CD4-positive, alpha-beta T cell (primary cell): ENCODE measurements at regions of chr10 and their contacts with region 1.

Region 1: DNA sequence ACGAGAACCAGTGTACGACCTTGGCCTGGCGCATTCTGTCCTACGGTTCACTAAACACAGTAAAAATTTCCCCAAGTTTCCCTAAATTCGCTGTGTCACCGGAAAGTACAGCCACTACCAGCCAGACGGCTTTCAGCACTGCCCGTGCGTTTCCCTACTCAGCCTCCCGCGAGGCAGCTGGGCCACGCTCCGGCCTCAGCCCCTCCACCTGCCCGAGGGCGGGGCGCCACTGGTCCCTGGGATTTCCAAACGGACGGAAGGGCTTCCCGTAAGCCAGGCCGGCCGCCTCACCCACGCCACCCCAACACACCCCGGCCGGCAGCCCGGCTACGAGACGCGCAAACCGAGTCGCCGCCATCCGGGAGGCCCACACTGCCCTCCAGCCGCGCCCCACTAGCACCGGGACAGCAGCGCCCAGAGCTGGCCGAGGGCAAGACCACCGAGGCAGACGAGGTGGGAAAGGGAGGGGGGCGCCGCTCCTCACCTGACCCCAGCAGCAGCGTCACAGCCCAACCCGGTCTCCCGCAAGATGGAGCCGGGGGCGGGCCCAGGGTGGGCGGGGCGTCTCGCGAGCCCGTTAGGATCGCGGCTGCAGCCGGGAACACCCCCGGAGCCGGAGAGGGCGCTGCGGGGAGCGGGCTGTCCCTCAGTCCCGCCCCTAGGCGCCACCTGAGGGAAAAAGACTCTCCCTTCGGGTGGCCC is at the start of gene ANXA7:
- DNase-seq: peak; percentile 83 to 96 (median 92)
- ATAC-seq: peak; percentile 97
- H3K4me3 ChIP-seq: peak within 1 kb of the TSS; percentile 75
- H3K4me3 Mint-ChIP-seq: peak within 1 kb of the TSS; percentile 91
- H3K27ac ChIP-seq: peak within 1 kb of the TSS; percentile 86 to 98
- H3K27ac Mint-ChIP-seq: peak within 1 kb of the TSS; percentile 84
- H3K4me1 ChIP-seq: peaks cover 36% of the 10 kb centered on the region
- H3K4me1 Mint-ChIP-seq: peaks cover 57% of the 10 kb centered on the region
- H3K27me3 ChIP-seq: no peaks in the 10 kb centered on the region
- H3K27me3 Mint-ChIP-seq: no peaks in the 10 kb centered on the region
- CTCF ChIP-seq: peak; percentile 67
- total RNA-seq, gene ANXA7: 77.7 to 79.6 TPM

Region 2: GRCh38 chr10:73358331-73359279 is 55.1 kb before region 1 on chr10 and contains the start of gene CFAP70:
- CTCF ChIA-PET with region 1: no interaction called
- POLR2A ChIA-PET with region 1: interaction called, 8 read pairs
- intact Hi-C with region 1: loop called (anchors 2 to 5 kb)
- DNase-seq: peak; percentile 85 to 98 (median 92)
- ATAC-seq: peak; percentile 98
- H3K4me3 ChIP-seq: peak within 1 kb of the TSS; percentile 82
- H3K4me3 Mint-ChIP-seq: peak within 1 kb of the TSS; percentile 98
- H3K27ac ChIP-seq: peak within 1 kb of the TSS; percentile 75 to 83
- H3K27ac Mint-ChIP-seq: peak within 1 kb of the TSS; percentile 95
- H3K4me1 ChIP-seq: peaks cover 7% of the 10 kb centered on the region
- H3K4me1 Mint-ChIP-seq: peaks cover 24% of the 10 kb centered on the region
- H3K27me3 ChIP-seq: no peaks in the 10 kb centered on the region
- H3K27me3 Mint-ChIP-seq: no peaks in the 10 kb centered on the region
- CTCF ChIP-seq: no peak
- total RNA-seq, gene CFAP70: 2.6 TPM

Region 3: GRCh38 chr10:73364964-73365363 is 48.7 kb before region 1 on chr10:
- CTCF ChIA-PET with region 1: no interaction called
- POLR2A ChIA-PET with region 1: no interaction called
- intact Hi-C with region 1: loop called in 1 of 2 experiments (anchors 5 kb)
- DNase-seq: no peak
- ATAC-seq: no peak
- H3K4me3 ChIP-seq: no peak overlapping the region
- H3K4me3 Mint-ChIP-seq: no peak overlapping the region
- H3K27ac ChIP-seq: no peak overlapping the region
- H3K27ac Mint-ChIP-seq: no peak overlapping the region
- H3K4me1 ChIP-seq: no peaks in the 10 kb centered on the region
- H3K4me1 Mint-ChIP-seq: peaks cover 3% of the 10 kb centered on the region
- H3K27me3 ChIP-seq: no peaks in the 10 kb centered on the region
- H3K27me3 Mint-ChIP-seq: no peaks in the 10 kb centered on the region
- CTCF ChIP-seq: no peak

Region 4: DNA sequence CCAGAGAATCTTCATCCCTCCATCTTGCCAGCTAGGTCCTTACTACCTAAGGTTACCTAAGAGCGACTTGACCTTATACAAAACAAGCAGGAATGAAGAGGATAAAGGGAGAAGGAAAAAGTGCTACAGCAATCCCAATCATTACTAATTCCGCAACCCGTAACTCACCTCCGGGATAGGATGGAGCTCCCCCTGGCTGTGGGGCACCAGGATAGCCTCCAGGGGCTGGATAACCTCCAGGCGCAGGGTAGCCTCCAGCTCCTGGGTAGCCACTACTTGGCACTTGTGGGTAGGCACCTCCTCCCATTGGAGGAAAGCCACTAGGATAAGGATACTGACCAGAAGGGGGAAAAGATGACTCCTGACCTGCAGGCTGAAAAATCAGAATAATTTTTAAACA is 15.7 kb before region 1 on chr10:
- CTCF ChIA-PET with region 1: no interaction called
- POLR2A ChIA-PET with region 1: no interaction called
- intact Hi-C with region 1: no loop called
- DNase-seq: no peak
- ATAC-seq: no peak
- H3K4me3 ChIP-seq: no peak overlapping the region
- H3K4me3 Mint-ChIP-seq: no peak overlapping the region
- H3K27ac ChIP-seq: no peak overlapping the region
- H3K27ac Mint-ChIP-seq: no peak overlapping the region
- H3K4me1 ChIP-seq: no peaks in the 10 kb centered on the region
- H3K4me1 Mint-ChIP-seq: no peaks in the 10 kb centered on the region
- H3K27me3 ChIP-seq: no peaks in the 10 kb centered on the region
- H3K27me3 Mint-ChIP-seq: no peaks in the 10 kb centered on the region
- CTCF ChIP-seq: no peak

Region 5: DNA sequence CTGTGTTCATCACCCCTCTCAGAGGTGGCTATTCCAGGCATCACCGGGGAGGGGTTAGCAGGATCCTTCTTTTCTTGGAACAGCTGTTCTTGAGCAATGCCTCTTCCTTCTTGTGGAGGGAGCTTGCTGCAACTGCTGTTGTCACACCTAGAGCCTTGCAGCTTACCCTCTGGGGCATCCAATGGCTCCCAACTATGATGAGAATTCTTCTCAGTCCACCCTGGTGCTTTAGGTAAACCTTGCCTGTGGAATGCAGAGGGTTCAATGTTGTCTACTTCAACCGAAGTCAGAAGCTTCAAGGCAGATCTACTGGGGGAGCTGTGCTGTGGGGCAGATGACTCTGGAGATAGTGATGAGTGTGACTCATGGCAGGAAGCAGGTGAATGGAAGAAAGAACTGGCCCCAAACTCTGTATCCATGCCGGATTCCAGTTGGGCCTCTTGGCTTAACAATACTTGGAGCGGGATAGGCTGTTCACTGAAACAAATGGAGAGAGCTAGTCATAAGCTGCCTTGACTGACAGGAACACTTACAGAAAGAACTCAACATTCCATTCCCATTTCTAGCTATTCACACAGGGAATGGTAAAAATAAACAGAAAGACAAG is 103.7 kb after region 1 on chr10:
- CTCF ChIA-PET with region 1: no interaction called
- POLR2A ChIA-PET with region 1: no interaction called
- intact Hi-C with region 1: no loop called
- DNase-seq: no peak
- ATAC-seq: no peak
- H3K4me3 ChIP-seq: no peak overlapping the region
- H3K4me3 Mint-ChIP-seq: no peak overlapping the region
- H3K27ac ChIP-seq: no peak overlapping the region
- H3K27ac Mint-ChIP-seq: no peak overlapping the region
- H3K4me1 ChIP-seq: no peaks in the 10 kb centered on the region
- H3K4me1 Mint-ChIP-seq: no peaks in the 10 kb centered on the region
- H3K27me3 ChIP-seq: no peaks in the 10 kb centered on the region
- H3K27me3 Mint-ChIP-seq: no peaks in the 10 kb centered on the region
- CTCF ChIP-seq: no peak

Region 6: DNA sequence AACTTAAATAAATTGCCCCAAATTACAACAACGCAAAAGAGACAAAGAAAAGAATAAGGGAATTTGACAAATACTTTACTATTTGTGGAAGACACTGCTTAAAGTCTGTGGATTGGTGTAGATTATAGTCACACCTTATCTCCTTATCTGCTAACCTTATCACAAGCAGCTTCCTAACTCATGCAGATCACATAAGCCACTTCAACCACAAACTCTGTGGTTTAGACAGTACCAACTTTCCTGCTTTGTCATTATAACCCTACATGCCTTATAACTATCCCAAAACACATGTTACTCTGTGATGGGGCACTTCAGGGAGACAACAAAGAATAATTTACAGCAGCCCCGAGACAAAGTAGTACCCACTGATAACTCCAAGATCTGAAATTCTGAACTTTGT is 123.6 kb after region 1 on chr10:
- CTCF ChIA-PET with region 1: no interaction called
- POLR2A ChIA-PET with region 1: no interaction called
- intact Hi-C with region 1: no loop called
- DNase-seq: peak in 3 of 14 experiments; percentile 13 to 25 (median 14)
- ATAC-seq: peak; percentile 57
- H3K4me3 ChIP-seq: no peak overlapping the region
- H3K4me3 Mint-ChIP-seq: no peak overlapping the region
- H3K27ac ChIP-seq: no peak overlapping the region
- H3K27ac Mint-ChIP-seq: no peak overlapping the region
- H3K4me1 ChIP-seq: peaks cover 7% of the 10 kb centered on the region
- H3K4me1 Mint-ChIP-seq: peaks cover 13% of the 10 kb centered on the region
- H3K27me3 ChIP-seq: no peaks in the 10 kb centered on the region
- H3K27me3 Mint-ChIP-seq: peaks cover 6% of the 10 kb centered on the region
- CTCF ChIP-seq: no peak